Left lung (tissue), 14 donors: ENCODE measurements at regions of chr3 and their contacts with region 1.

Region 1: DNA sequence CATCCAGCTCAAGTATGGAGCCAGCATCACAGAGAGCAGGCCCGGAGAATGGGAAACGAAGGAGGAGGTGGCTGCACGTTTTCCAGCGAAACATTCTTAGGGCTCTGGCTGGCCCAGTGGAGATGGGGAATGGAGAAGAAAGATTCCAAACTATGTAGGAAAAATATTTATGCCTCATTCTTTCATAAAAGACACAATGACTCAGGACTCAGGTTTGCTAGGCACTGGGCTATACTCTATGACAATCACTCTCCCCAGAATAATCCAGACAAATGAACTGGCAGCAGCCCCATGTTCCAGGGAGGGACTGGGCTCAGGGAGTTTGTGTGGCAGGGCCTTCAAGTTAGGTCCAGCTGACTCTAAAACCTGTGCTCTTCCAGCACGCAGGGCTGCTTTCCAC is 110.8 kb upstream of the RAD18 start:
- DNase-seq: no peak
- ATAC-seq: no peak
- H3K4me3 ChIP-seq: no peak overlapping the region
- H3K27ac ChIP-seq: no peak overlapping the region
- H3K4me1 ChIP-seq: no peaks in the 10 kb centered on the region
- H3K27me3 ChIP-seq: no peaks in the 10 kb centered on the region
- CTCF ChIP-seq: no peak

Region 2: DNA sequence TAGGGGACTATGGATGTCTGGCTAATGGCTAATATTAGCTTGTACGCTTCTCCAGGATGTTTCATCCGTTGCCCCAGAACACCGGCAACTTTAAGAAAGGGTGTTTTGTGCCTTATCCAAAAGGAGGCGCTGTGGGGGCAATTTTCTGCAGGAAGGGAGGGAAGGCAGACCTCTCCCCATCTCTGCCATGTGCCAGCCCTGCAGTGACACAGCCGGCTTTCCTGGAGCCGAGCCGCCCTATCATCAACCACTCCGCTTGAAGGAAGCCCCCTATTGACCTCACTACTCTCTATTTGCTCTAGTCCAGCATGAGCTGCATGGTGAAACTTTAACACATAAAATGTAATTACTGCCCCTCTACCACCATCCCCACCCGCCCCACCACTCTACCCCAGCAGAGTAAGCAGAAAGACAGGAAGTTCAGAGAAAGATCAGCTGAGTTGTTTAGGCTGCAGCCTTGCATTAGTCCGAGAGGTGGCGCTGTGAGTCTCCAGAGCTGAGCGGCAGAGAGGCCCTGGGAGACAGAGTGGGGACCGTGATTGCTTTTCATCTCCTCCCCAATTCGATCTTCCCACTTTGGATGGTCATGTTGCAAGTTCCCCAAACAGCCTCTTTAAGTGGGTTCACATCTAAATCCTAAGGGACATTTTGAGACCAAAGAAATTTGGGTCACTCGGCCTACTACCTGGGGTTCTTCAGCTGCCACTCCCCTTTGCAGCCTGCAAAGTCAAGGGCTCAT is 86.3 kb before region 1 on chr3:
- intact Hi-C with region 1: loop called in 1 of 2 experiments (anchors 5 kb)
- DNase-seq: peak in 2 of 4 donors; percentile 51 to 81
- ATAC-seq: peak; percentile 92
- H3K4me3 ChIP-seq: no peak overlapping the region
- H3K27ac ChIP-seq: no peak overlapping the region
- H3K4me1 ChIP-seq: no peaks in the 10 kb centered on the region
- H3K27me3 ChIP-seq: no peaks in the 10 kb centered on the region
- CTCF ChIP-seq: peak; percentile 56 to 71

Region 3: DNA sequence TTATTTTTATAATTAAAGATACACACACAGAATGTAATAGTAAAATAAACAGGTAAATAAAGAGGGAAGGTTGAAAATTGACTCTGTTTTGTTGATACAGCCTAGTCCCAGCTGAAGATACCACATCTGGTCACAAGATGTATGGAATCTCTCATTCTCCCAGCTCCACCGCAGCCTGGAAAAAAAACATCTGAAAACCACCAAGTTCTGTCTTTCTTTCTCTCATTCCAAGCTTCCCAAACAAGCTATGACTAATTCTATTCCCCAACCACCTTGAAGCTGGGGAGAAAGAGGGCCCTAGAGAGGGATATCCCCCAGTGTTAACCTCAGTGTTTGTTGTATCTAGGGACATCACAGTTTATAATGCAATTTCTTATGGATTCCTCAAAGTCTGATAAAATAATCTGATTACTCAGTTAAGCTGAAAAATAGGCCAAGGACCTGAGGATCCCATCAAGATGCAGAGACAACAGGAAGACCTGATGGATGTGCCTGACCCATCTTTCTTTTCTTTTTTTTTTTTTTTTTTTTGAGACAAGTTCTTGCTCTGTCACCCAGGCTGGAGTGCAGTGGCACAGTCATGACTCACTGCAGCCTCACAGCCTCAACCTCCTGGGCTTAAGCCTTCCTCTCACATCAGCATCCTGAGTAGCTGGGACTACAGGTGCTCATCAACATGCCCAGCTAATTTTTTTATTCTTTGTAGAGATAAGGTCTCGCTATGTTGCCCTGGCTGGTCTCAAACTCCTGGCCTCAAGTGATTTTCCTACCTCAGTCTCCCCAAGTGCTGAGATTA is 137.3 kb after region 1 on chr3:
- intact Hi-C with region 1: no loop called
- DNase-seq: no peak
- ATAC-seq: no peak
- H3K4me3 ChIP-seq: no peak overlapping the region
- H3K27ac ChIP-seq: no peak overlapping the region
- H3K4me1 ChIP-seq: no peaks in the 10 kb centered on the region
- H3K27me3 ChIP-seq: no peaks in the 10 kb centered on the region
- CTCF ChIP-seq: no peak